ENCODE measurements at regions of chr18 and their contacts with region 1.

Region 1: GRCh38 chr18:23356915-23357601 is 96.0 kb upstream of the RIOK3 start:
- DNase-seq: no peak
- ATAC-seq: no peak
- H3K4me3 Mint-ChIP-seq: no peak overlapping the region
- H3K27ac Mint-ChIP-seq: peak overlapping the region; percentile 94
- H3K4me1 Mint-ChIP-seq: peaks cover 33% of the 10 kb centered on the region
- H3K27me3 Mint-ChIP-seq: no peaks in the 10 kb centered on the region

Region 2: GRCh38 chr18:23032030-23032582 is 325.0 kb before region 1 on chr18:
- CTCF ChIA-PET with region 1: interaction called, 10 read pairs
- POLR2A ChIA-PET with region 1: no interaction called
- DNase-seq: no peak
- ATAC-seq: no peak
- H3K4me3 Mint-ChIP-seq: no peak overlapping the region
- H3K27ac Mint-ChIP-seq: no peak overlapping the region
- H3K4me1 Mint-ChIP-seq: peaks cover 5% of the 10 kb centered on the region
- H3K27me3 Mint-ChIP-seq: no peaks in the 10 kb centered on the region

Region 3: GRCh38 chr18:23131693-23132319 is 225.3 kb before region 1 on chr18:
- CTCF ChIA-PET with region 1: interaction called, 94 read pairs
- POLR2A ChIA-PET with region 1: interaction called, 3 read pairs
- DNase-seq: peak; percentile 82
- ATAC-seq: no peak
- H3K4me3 Mint-ChIP-seq: no peak overlapping the region
- H3K27ac Mint-ChIP-seq: no peak overlapping the region
- H3K4me1 Mint-ChIP-seq: peaks cover 29% of the 10 kb centered on the region
- H3K27me3 Mint-ChIP-seq: peaks cover 13% of the 10 kb centered on the region

Region 4: GRCh38 chr18:23237524-23238151 is 119.4 kb before region 1 on chr18:
- CTCF ChIA-PET with region 1: interaction called, 34 read pairs
- POLR2A ChIA-PET with region 1: no interaction called
- DNase-seq: peak; percentile 76
- ATAC-seq: peak; percentile 83
- H3K4me3 Mint-ChIP-seq: peak overlapping the region; percentile 60
- H3K27ac Mint-ChIP-seq: peak overlapping the region; percentile 92
- H3K4me1 Mint-ChIP-seq: peaks cover 78% of the 10 kb centered on the region
- H3K27me3 Mint-ChIP-seq: no peaks in the 10 kb centered on the region

Region 5: DNA sequence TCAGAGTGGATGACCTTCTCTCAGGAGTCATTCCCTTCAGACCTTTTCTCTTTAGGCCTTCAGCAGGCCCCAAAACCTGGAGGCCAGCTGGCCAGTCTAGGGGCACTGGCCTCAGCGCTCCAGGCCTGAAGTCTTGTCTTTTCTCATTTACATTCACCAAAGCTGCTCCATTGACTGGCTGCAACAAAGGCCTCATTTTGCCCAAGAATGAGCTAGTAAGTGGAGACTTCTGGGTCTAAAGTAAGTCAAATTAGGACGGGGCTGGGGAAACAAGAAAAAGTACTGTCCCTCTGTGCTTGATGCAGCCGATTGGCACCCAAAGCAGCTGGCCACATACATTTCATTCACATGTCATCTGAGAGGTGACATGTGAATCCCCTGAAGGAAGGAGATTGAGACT is 12.2 kb after region 1 on chr18:
- CTCF ChIA-PET with region 1: no interaction called
- POLR2A ChIA-PET with region 1: no interaction called
- DNase-seq: no peak
- ATAC-seq: no peak
- H3K4me3 Mint-ChIP-seq: no peak overlapping the region
- H3K27ac Mint-ChIP-seq: no peak overlapping the region
- H3K4me1 Mint-ChIP-seq: no peaks in the 10 kb centered on the region
- H3K27me3 Mint-ChIP-seq: no peaks in the 10 kb centered on the region

Measured in activated CD8-positive, alpha-beta T cell treated with anti-CD3 and anti-CD28 coated beads, Interleukin-2, amount 10 ng/mL, durations not matched to agents 7 days and 5 days (primary cell).